ENCODE measurements at regions of chr2 and their contacts with region 1.

Region 1: DNA sequence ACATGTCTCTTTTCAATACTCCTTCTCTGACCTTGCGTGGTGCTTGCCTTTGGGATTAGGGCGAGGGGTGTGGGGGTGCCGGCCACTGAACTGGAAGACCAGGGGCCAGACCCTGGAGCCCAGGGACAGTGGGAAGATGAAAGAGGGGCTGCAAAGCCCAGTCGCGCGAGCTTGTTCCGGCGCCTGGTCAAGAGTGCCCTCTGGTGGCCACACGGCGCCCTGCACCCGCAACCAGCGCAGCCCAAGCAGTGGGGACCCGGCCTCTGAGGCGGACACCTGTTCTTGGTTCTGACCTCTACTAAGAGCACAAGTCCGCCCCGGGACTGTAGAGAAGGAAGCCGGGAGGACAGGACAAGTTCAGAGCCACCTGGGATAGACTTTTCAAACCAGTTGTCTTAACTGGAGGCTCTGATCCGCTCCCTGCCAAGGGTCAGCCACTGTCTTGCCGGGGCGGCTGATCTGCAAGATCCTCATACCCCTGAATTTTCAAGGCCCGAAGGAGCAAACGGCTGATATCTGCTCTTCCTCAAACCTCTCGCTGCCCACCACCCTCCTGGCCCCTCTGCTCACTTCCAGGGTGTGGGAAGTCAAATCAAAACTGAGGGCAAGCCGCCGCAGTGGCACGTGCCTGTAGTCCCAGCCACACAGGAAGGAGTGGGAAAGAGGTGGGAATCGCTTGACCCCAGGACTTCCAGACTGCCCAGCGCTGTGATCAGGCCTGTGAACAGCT is 14.9 kb upstream of the MSH6 start:
- DNase-seq: peak; percentile 57
- H3K4me3 ChIP-seq: no peak overlapping the region
- H3K27ac ChIP-seq: no peak overlapping the region
- H3K4me1 ChIP-seq: no peaks in the 10 kb centered on the region
- H3K27me3 ChIP-seq: no peaks in the 10 kb centered on the region
- CTCF ChIP-seq: peak; percentile 99

Region 2: GRCh38 chr2:47334356-47335136 is 433.5 kb before region 1 on chr2:
- CTCF ChIA-PET with region 1: interaction called, 19 read pairs
- POLR2A ChIA-PET with region 1: no interaction called
- intact Hi-C with region 1: loop called (anchors 2 kb)
- DNase-seq: peak; percentile 51
- H3K4me3 ChIP-seq: no peak overlapping the region
- H3K27ac ChIP-seq: no peak overlapping the region
- H3K4me1 ChIP-seq: peaks cover 7% of the 10 kb centered on the region
- H3K27me3 ChIP-seq: no peaks in the 10 kb centered on the region
- CTCF ChIP-seq: no peak

Region 3: GRCh38 chr2:47437287-47437686 is 330.8 kb before region 1 on chr2:
- CTCF ChIA-PET with region 1: interaction called, 17 read pairs
- POLR2A ChIA-PET with region 1: no interaction called
- intact Hi-C with region 1: loop called (anchors 1 kb)
- DNase-seq: peak; percentile 46
- H3K4me3 ChIP-seq: no peak overlapping the region
- H3K27ac ChIP-seq: no peak overlapping the region
- H3K4me1 ChIP-seq: no peaks in the 10 kb centered on the region
- H3K27me3 ChIP-seq: no peaks in the 10 kb centered on the region
- CTCF ChIP-seq: peak; percentile 60

Region 4: DNA sequence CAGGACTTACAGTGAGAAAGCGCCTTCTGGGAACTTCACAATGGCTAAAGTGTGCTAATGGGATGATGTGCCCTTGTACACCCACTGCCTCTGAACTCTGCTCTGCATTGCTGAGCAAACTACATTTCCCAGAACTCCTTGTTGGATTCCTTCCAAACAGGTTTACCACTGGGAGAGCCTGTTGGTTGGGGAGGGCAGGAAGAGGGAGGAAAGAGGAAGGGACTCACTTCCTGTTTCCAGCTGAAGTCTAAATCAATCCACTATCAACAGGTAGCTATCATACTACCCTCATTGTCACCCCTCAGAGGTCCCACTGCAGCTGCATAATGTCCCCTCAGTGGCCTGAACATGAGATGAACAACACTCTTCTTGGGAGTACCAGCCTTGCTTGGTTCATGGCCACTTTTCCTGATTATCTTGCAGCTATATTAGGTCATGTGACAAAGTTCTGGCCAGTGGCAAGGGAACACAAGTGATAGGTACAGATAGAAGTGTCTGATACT is 255.4 kb before region 1 on chr2:
- CTCF ChIA-PET with region 1: interaction called, 11 read pairs
- POLR2A ChIA-PET with region 1: no interaction called
- intact Hi-C with region 1: no loop called
- DNase-seq: peak; percentile 58
- H3K4me3 ChIP-seq: no peak overlapping the region
- H3K27ac ChIP-seq: no peak overlapping the region
- H3K4me1 ChIP-seq: no peaks in the 10 kb centered on the region
- H3K27me3 ChIP-seq: no peaks in the 10 kb centered on the region
- CTCF ChIP-seq: no peak

Region 5: GRCh38 chr2:47906157-47907038 is 138.4 kb after region 1 on chr2 and contains the start of gene FBXO11:
- CTCF ChIA-PET with region 1: no interaction called
- POLR2A ChIA-PET with region 1: no interaction called
- intact Hi-C with region 1: no loop called
- DNase-seq: peak; percentile 100
- H3K4me3 ChIP-seq: peak within 1 kb of the TSS; percentile 86
- H3K27ac ChIP-seq: peak within 1 kb of the TSS; percentile 98
- H3K4me1 ChIP-seq: peaks cover 20% of the 10 kb centered on the region
- H3K27me3 ChIP-seq: no peaks in the 10 kb centered on the region
- CTCF ChIP-seq: peak; percentile 67
- total RNA-seq, gene FBXO11: 73.9 and 84.0 TPM in 2 replicates